Endothelial cell of umbilical vein (primary cell): ENCODE measurements at regions of chr18 and their contacts with region 1.

Region 1: DNA sequence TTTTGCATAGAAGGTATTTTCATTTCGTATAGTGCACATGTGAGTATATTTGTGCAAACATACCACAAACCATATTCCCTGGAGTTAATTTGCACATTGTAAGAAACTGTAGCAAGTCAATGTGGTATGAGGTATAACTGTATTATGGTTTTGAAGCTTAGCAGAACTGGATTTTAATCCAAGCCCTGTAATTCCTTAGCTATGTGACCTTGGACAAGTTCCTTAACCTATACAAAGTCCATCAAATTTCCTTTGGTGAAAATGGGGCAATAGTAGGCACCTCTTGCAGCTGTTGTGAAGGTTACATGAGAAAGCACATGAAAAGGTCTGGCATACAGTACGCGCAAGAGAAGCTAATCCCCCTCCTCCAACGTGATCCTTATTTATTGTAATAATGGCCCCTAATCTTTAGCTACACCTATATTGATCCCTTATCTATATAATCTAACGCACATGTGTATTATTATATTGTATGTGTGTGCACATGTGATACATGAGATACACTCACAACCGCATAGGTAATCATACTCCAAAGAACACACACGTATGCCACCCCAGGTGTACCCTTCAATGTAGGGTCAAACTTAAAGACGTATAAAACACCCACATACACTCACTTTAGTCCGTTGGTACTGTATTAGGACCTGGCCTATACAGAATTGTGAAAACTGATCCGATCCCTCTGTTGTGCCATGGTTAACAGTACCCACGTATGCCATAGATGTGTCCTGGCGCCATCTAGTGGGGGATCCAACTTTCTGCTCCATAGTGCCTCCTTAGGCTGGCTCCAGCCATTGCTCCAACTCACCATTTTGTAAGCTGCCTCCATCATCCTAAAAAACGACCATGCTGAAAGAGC is 402.9 kb upstream of the SLC14A2 start:
- DNase-seq: peak; percentile 76
- H3K4me3 ChIP-seq: no peak overlapping the region
- H3K27ac ChIP-seq: no peak overlapping the region
- H3K4me1 ChIP-seq: no peaks in the 10 kb centered on the region
- H3K27me3 ChIP-seq: no peaks in the 10 kb centered on the region
- CTCF ChIP-seq: peak; percentile 91 to 99
- POLR2A ChIP-seq: no peak

Region 2: DNA sequence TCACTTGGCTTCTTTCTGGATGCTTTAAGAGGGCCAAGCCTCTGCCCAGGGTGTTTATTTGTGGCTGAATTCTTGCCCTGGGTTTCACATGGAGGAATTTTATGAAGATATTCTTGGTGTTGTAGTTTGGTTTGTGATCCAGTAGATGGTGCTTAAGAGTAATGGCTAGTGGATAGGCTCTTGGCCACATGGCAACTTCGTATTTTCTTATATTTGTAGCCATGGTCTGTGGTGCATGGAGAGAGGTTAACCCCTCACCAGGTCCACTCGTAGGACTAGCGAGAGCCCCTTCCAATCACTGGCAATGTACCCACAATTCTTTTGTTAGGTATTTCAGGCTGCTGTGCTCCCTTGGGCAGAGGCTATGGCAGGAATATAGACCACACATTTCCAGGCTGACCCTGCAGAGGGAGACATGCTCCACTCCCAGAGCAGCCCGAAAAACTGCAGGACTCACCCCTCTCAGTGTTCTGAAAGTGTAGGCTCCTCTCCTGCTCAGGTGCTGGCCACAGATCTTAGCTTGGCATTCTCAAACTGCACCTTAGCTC is 1113.8 kb before region 1 on chr18:
- CTCF ChIA-PET with region 1: interaction called, 10 read pairs
- POLR2A ChIA-PET with region 1: no interaction called
- dilution Hi-C with region 1: no loop called
- intact Hi-C with region 1: loop called (anchors 1 kb)
- DNase-seq: peak; percentile 53
- H3K4me3 ChIP-seq: no peak overlapping the region
- H3K27ac ChIP-seq: no peak overlapping the region
- H3K4me1 ChIP-seq: no peaks in the 10 kb centered on the region
- H3K27me3 ChIP-seq: peaks cover 0 to 3% of the 10 kb centered on the region in 2 experiments
- CTCF ChIP-seq: peak; percentile 23 to 33
- POLR2A ChIP-seq: no peak

Region 3: DNA sequence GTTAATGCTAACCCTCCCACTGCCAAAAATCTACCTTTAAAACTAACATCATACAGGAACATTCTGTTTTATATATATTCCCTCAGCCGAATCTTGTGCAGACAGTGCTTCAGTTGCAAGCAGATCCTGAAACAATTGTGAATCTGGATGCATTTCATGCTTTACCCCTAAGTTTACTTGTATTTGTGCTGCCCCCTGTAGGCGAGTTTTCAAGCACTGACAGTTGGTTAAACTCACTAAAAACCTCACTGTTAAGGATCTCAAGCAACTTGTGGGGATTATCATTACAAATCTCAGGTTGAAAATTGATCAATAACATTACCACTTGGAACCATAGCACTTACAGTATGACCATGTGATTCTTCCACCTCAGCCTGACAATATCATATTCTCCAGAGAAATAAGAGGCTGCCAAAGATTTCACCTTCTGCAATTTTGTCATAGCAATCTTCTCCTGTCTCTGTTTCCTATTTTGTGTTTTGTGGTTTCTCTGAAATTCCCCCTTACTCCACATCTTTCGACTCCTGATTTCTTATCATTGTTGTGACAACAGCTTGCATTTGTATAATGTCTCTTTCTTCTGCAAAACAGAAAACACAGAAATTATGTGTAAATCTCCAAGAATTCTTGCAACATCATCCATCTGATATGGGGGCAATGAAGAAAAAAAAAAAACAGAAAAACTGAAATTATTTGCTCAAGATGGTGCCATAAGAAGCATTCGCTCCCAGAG is 886.3 kb before region 1 on chr18:
- CTCF ChIA-PET with region 1: no interaction called
- POLR2A ChIA-PET with region 1: no interaction called
- dilution Hi-C with region 1: no loop called
- intact Hi-C with region 1: loop called (anchors 10 kb)
- DNase-seq: peak; percentile 72
- H3K4me3 ChIP-seq: no peak overlapping the region
- H3K27ac ChIP-seq: no peak overlapping the region
- H3K4me1 ChIP-seq: no peaks in the 10 kb centered on the region
- H3K27me3 ChIP-seq: no peaks in the 10 kb centered on the region
- CTCF ChIP-seq: peak; percentile 54 to 64
- POLR2A ChIP-seq: no peak

Region 4: GRCh38 chr18:44679056-44679905 is 533.1 kb before region 1 on chr18:
- CTCF ChIA-PET with region 1: no interaction called
- POLR2A ChIA-PET with region 1: no interaction called
- dilution Hi-C with region 1: no loop called
- intact Hi-C with region 1: loop called (anchors 1 kb)
- DNase-seq: peak; percentile 87
- H3K4me3 ChIP-seq: peak overlapping the region; percentile 61 to 94 (median 81)
- H3K27ac ChIP-seq: no peak overlapping the region
- H3K4me1 ChIP-seq: no peaks in the 10 kb centered on the region
- H3K27me3 ChIP-seq: peaks cover 28 to 36% of the 10 kb centered on the region in 2 experiments
- CTCF ChIP-seq: peak; percentile 34 to 63
- POLR2A ChIP-seq: no peak